A549 (cell line): ENCODE measurements at regions of chr17 and their contacts with region 1.

Region 1: GRCh38 chr17:38761612-38762011 is 9.1 kb downstream of the PSMB3 start:
- DNase-seq: peak; percentile 76 to 81
- ATAC-seq: peak; percentile 77 to 86; a peak in 5 of 6 replicates
- H3K4me3 ChIP-seq: no peak overlapping the region
- H3K27ac ChIP-seq: no peak overlapping the region
- H3K4me1 ChIP-seq: no peaks in the 10 kb centered on the region
- CTCF ChIP-seq: peak; percentile 37; the same call in 2 of the 3 replicates
- EP300 ChIP-seq: no peak
- POLR2A ChIP-seq: no peak
- RAD21 ChIP-seq: peak; percentile 38 to 67

Region 2: GRCh38 chr17:38777641-38778250 is 16.1 kb after region 1 on chr17:
- CTCF ChIA-PET with region 1: interaction called, 12 read pairs
- POLR2A ChIA-PET with region 1: interaction called, 3 read pairs
- DNase-seq: no peak
- ATAC-seq: no peak
- H3K4me3 ChIP-seq: no peak overlapping the region
- H3K27ac ChIP-seq: no peak overlapping the region
- H3K4me1 ChIP-seq: no peaks in the 10 kb centered on the region
- CTCF ChIP-seq: no peak
- EP300 ChIP-seq: no peak
- POLR2A ChIP-seq: no peak
- RAD21 ChIP-seq: no peak